MCF 10A (cell line): ENCODE measurements at regions of chr7 and their contacts with region 1.

Region 1: GRCh38 chr7:17298207-17298839 is at the start of gene AHR:
- DNase-seq: peak; percentile 89
- H3K4me3 Mint-ChIP-seq: peak within 1 kb of the TSS; percentile 88
- H3K27ac Mint-ChIP-seq: peak within 1 kb of the TSS; percentile 97
- H3K4me1 Mint-ChIP-seq: peaks cover 18% of the 10 kb centered on the region
- H3K27me3 Mint-ChIP-seq: no peaks in the 10 kb centered on the region
- CTCF ChIP-seq: no peak
- total RNA-seq, gene AHR: 99.1 and 100 TPM in 2 replicates

Region 2: DNA sequence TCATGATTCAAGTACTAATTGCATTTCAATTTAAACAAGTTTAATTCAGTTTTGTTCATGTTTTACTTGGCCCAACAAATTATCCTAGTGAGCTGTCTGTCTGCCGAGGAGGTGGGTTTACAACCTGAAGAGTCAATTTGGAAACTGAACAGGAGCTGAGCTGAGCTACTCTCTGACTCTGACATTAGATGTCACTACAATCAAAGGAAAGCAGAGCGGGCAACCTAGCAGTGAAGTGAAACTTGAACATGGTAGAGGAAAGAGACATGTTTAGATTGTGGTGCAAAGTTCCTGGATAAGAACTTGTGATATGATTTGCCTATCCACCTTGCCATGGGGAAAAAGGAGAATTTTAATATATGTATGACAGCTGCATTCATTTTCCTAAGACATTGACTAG is 407.0 kb before region 1 on chr7:
- CTCF ChIA-PET with region 1: no interaction called
- POLR2A ChIA-PET with region 1: no interaction called
- intact Hi-C with region 1: loop called (anchors 1 kb)
- DNase-seq: peak; percentile 74
- H3K4me3 Mint-ChIP-seq: no peak overlapping the region
- H3K27ac Mint-ChIP-seq: no peak overlapping the region
- H3K4me1 Mint-ChIP-seq: peaks cover 5% of the 10 kb centered on the region
- H3K27me3 Mint-ChIP-seq: no peaks in the 10 kb centered on the region
- CTCF ChIP-seq: peak; percentile 68

Region 3: DNA sequence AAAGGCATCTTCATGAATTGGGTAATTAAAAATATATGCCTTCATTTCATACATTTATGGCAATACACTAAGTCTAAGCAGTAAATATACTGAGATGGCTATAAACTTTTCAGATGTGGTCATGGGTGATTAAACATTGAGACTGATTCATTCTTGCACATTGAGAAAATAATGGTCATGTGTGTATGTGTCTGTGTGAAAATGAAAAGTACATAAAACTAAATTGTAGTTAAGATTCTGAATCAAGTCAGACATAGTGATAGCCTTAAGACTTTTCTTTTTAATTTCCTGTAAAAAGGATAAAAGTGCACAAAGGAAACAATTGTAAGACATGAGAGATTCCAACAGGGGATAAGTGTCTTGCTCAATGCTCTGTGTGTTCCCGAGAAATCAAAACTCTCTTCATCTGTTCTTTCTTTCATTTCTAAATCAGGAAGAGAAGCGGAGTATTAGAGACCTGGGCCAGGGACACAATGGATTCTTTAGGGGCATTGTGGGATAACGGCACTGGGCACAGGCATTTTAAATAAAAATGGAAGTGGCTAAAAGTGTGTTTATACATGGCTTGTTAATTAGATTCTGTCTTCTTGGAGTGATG is 346.7 kb before region 1 on chr7:
- CTCF ChIA-PET with region 1: no interaction called
- POLR2A ChIA-PET with region 1: no interaction called
- intact Hi-C with region 1: no loop called
- DNase-seq: no peak
- H3K4me3 Mint-ChIP-seq: no peak overlapping the region
- H3K27ac Mint-ChIP-seq: no peak overlapping the region
- H3K4me1 Mint-ChIP-seq: peaks cover 10% of the 10 kb centered on the region
- H3K27me3 Mint-ChIP-seq: no peaks in the 10 kb centered on the region
- CTCF ChIP-seq: no peak

Region 4: GRCh38 chr7:16989811-16990413 is 308.4 kb before region 1 on chr7:
- CTCF ChIA-PET with region 1: interaction called, 15 read pairs
- POLR2A ChIA-PET with region 1: interaction called, 39 read pairs
- intact Hi-C with region 1: no loop called
- DNase-seq: peak; percentile 99
- H3K4me3 Mint-ChIP-seq: peak overlapping the region; percentile 70
- H3K27ac Mint-ChIP-seq: peak overlapping the region; percentile 78
- H3K4me1 Mint-ChIP-seq: peaks cover 24% of the 10 kb centered on the region
- H3K27me3 Mint-ChIP-seq: no peaks in the 10 kb centered on the region
- CTCF ChIP-seq: no peak

Region 5: GRCh38 chr7:17095001-17095574 is 203.2 kb before region 1 on chr7:
- CTCF ChIA-PET with region 1: interaction called, 5 read pairs
- POLR2A ChIA-PET with region 1: interaction called, 69 read pairs
- intact Hi-C with region 1: loop called (anchors 1 kb)
- DNase-seq: peak; percentile 99
- H3K4me3 Mint-ChIP-seq: no peak overlapping the region
- H3K27ac Mint-ChIP-seq: peak overlapping the region; percentile 87
- H3K4me1 Mint-ChIP-seq: peaks cover 49% of the 10 kb centered on the region
- H3K27me3 Mint-ChIP-seq: no peaks in the 10 kb centered on the region
- CTCF ChIP-seq: no peak

Region 6: GRCh38 chr7:17408245-17408903 is 110.1 kb after region 1 on chr7:
- CTCF ChIA-PET with region 1: interaction called, 5 read pairs
- POLR2A ChIA-PET with region 1: interaction called, 5 read pairs
- intact Hi-C with region 1: loop called (anchors 2 kb)
- DNase-seq: peak; percentile 97
- H3K4me3 Mint-ChIP-seq: peak overlapping the region; percentile 48
- H3K27ac Mint-ChIP-seq: peak overlapping the region; percentile 90
- H3K4me1 Mint-ChIP-seq: peaks cover 34% of the 10 kb centered on the region
- H3K27me3 Mint-ChIP-seq: no peaks in the 10 kb centered on the region
- CTCF ChIP-seq: no peak

Region 7: DNA sequence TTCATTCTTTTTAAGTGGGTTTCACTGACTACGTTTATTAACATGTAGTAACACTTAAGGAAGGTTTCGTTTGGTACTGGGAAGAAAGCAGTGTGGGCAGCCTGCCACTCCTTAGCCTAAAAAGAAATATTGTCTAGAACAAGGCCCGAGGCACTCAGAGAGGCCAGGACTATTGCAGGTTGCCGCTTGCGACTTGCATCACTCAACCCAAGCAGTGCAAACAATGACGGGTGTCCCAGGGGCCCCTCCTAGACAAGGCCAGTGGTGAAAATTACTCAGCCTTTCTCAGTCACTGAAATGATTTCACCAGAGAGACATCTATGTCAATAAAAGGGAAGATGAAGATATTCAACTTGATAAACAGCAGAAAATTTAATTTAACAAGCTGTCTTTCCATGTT is 398.1 kb after region 1 on chr7:
- CTCF ChIA-PET with region 1: interaction called, 3 read pairs
- POLR2A ChIA-PET with region 1: interaction called, 14 read pairs
- intact Hi-C with region 1: no loop called
- DNase-seq: peak; percentile 99
- H3K4me3 Mint-ChIP-seq: no peak overlapping the region
- H3K27ac Mint-ChIP-seq: peak overlapping the region; percentile 89
- H3K4me1 Mint-ChIP-seq: peaks cover 20% of the 10 kb centered on the region
- H3K27me3 Mint-ChIP-seq: no peaks in the 10 kb centered on the region
- CTCF ChIP-seq: no peak

Region 8: DNA sequence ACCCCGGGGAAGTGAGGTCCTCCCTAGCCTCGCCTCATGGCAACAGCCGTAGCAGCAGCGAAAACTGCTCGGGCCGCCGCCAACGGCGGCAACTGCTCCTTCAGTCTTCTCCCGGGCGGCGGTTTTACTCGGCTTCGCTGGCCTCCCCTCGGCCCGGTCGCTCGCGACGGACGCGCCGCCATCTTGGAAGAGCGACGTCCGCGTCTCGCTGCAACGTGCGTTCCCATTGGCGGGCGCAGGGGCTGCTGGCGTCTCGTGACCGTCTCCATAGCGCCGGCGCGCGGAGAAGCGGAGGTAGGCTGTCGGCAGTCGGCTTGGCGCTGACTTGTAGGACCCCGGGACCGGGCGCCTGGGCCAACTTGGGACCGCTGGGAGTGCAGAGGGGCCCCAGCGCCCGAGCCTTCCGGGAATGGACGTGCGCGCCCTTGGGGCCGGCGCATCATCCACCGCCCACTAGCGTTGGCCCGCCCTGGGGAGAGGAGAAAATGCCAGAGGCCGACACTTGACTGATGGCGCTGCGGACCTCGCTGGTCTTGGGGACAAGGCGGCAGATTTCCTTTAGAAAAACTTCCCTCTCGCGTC is 642.1 kb after region 1 on chr7 and contains the start of gene SNX13:
- CTCF ChIA-PET with region 1: interaction called, 3 read pairs
- POLR2A ChIA-PET with region 1: interaction called, 4 read pairs
- intact Hi-C with region 1: loop called (anchors 10 kb)
- DNase-seq: peak; percentile 90
- H3K4me3 Mint-ChIP-seq: peak within 1 kb of the TSS; percentile 100
- H3K27ac Mint-ChIP-seq: peak within 1 kb of the TSS; percentile 99
- H3K4me1 Mint-ChIP-seq: peaks cover 29% of the 10 kb centered on the region
- H3K27me3 Mint-ChIP-seq: no peaks in the 10 kb centered on the region
- CTCF ChIP-seq: peak; percentile 19
- total RNA-seq, gene SNX13: 38.5 and 42.0 TPM in 2 replicates